Gastrocnemius medialis (tissue), 4 donors: ENCODE measurements at regions of chr2 and their contacts with region 1.

Region 1: DNA sequence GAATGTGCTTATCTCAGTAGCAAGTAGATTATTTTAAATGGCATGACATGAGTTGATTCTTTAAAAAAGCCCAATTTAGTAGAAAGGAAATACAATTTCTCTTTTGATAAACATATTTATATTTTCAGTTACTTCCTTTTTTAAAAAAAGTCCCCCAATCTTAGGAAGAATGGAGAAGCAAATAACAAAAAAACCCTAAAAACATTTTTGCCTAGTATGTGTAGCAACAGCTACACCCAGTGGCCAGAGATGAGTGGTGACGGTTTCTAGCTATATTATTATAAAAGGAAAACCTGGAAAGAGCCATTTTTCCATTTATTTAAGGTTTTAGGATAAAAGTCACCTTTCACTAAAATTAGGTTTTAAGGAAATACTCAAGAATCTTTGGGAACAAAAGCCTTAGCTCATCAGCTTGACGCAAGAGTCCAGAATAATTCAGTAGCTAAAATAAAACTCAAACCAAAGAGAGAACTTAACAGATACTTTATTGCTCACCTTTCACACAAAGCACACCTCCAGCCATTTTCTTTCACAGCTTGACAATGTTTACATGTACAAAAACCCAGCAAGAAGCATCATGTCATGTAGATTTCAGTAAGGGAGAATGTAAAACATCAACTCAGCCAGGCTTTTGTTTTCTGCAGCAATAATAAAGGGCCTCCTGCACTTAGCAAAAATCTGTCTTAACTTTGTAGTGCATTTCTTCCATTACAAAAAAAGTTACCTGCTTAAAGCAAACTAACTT is 15.7 kb downstream of the FAM98A start:
- DNase-seq: no peak
- ATAC-seq: no peak
- H3K4me3 ChIP-seq: no peak overlapping the region
- H3K27ac ChIP-seq: no peak overlapping the region
- H3K4me1 ChIP-seq: peaks cover 12 to 15% of the 10 kb centered on the region in 2 donors
- H3K27me3 ChIP-seq: no peaks in the 10 kb centered on the region
- CTCF ChIP-seq: peak; percentile 69 to 91 (median 83)
- POLR2A ChIP-seq: no peak

Region 2: DNA sequence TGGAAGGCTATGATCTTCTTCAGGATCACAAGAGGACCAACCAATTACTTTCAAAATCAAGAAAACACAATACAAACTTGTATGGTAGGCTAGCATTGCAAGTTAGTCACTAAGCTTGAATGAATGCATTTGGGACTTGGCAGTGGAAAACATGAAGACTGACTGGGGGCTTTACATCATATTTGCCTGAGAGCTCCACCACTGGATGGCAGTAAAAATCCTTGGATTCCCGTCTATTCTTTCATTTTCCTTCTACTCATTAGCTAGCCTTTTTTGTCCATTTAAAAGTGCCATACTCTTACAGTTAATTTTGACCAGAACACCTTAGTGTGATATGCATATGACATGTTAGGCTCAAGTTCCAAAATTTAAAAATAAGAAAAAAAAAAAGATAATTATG is 170.4 kb before region 1 on chr2:
- in situ Hi-C with region 1: loop called in 1 of 4 experiments (anchors 25 kb)
- intact Hi-C with region 1: loop called (anchors 1 kb)
- DNase-seq: no peak
- ATAC-seq: no peak
- H3K4me3 ChIP-seq: no peak overlapping the region
- H3K27ac ChIP-seq: no peak overlapping the region
- H3K4me1 ChIP-seq: peaks cover 0 to 6% of the 10 kb centered on the region in 2 donors
- H3K27me3 ChIP-seq: no peaks in the 10 kb centered on the region
- CTCF ChIP-seq: peak; percentile 17 to 59 (median 26)
- POLR2A ChIP-seq: no peak

Region 3: GRCh38 chr2:33475224-33476130 is 107.9 kb before region 1 on chr2:
- in situ Hi-C with region 1: loop called in 1 of 4 experiments (anchors 10 kb)
- intact Hi-C with region 1: loop called (anchors 5 kb)
- DNase-seq: peak; percentile 72 to 78
- ATAC-seq: peak; percentile 76 to 77
- H3K4me3 ChIP-seq: peak overlapping the region; percentile 69 to 99 (median 78)
- H3K27ac ChIP-seq: peak overlapping the region; percentile 90 to 100 (median 93)
- H3K4me1 ChIP-seq: peaks cover 48 to 52% of the 10 kb centered on the region in 2 donors
- H3K27me3 ChIP-seq: no peaks in the 10 kb centered on the region
- CTCF ChIP-seq: peak; percentile 75 to 91 (median 87)
- POLR2A ChIP-seq: no peak